Endothelial cell of umbilical vein (primary cell): ENCODE measurements at regions of chr3 and their contacts with region 1.

Region 1: DNA sequence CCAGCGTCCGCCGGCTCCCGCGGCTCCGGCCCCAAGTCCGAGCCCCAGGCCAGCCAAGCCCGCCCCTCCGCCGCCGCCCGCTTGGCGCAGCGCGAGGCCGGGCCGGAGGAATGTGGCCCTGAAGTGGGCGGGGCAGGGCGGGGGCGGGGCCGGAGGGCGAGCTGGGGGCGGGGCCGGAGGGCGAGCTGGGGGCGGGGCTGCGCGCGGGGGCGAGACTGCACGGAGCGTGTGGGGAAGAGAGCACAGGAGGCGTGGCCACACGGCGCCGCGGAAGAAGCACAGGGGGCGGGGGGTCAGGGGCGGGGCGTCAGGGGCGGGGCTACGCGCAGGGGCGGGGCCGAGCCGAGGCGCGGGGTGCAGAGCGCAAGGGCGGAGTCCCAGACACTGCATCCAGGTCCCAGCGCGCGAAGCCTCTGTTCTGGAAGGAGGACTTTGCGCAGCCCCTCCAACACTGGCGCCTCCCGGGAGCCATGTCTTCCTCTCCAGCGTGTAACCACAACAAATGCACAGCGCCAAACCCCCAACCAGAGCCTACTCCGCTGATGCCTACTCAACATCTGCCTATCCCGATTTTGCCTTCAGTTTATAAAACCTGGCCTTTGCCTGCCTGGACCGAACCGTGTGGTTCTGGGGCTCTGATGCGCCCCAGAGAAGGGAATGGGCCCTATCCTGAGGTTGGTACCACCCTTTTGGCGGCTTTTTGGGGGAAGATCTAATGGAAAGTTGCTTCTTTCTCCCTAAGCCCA is 105.5 kb downstream of the IQSEC1 start:
- DNase-seq: peak; percentile 69
- H3K4me3 ChIP-seq: peak overlapping the region; percentile 70 to 92 (median 72)
- H3K27ac ChIP-seq: no peak overlapping the region
- H3K4me1 ChIP-seq: peaks cover 30% of the 10 kb centered on the region
- H3K27me3 ChIP-seq: peaks cover 11 to 14% of the 10 kb centered on the region in 2 experiments
- CTCF ChIP-seq: no peak
- POLR2A ChIP-seq: peak; percentile 52

Region 2: GRCh38 chr3:12922306-12922705 is 45.5 kb before region 1 on chr3:
- CTCF ChIA-PET with region 1: interaction called, 3 read pairs
- POLR2A ChIA-PET with region 1: no interaction called
- dilution Hi-C with region 1: no loop called
- intact Hi-C with region 1: loop called (anchors 5 kb)
- DNase-seq: peak; percentile 21
- H3K4me3 ChIP-seq: no peak overlapping the region
- H3K27ac ChIP-seq: no peak overlapping the region
- H3K4me1 ChIP-seq: peaks cover 17% of the 10 kb centered on the region
- H3K27me3 ChIP-seq: no peaks in the 10 kb centered on the region
- CTCF ChIP-seq: no peak
- POLR2A ChIP-seq: no peak

Region 3: GRCh38 chr3:12948891-12949711 is 18.7 kb before region 1 on chr3:
- CTCF ChIA-PET with region 1: interaction called, 10 read pairs
- POLR2A ChIA-PET with region 1: no interaction called
- dilution Hi-C with region 1: no loop called
- intact Hi-C with region 1: no loop called
- DNase-seq: peak; percentile 45
- H3K4me3 ChIP-seq: no peak overlapping the region
- H3K27ac ChIP-seq: no peak overlapping the region
- H3K4me1 ChIP-seq: peaks cover 15% of the 10 kb centered on the region
- H3K27me3 ChIP-seq: no peaks in the 10 kb centered on the region
- CTCF ChIP-seq: peak in 1 of 2 donors; percentile 22
- POLR2A ChIP-seq: no peak

Region 4: DNA sequence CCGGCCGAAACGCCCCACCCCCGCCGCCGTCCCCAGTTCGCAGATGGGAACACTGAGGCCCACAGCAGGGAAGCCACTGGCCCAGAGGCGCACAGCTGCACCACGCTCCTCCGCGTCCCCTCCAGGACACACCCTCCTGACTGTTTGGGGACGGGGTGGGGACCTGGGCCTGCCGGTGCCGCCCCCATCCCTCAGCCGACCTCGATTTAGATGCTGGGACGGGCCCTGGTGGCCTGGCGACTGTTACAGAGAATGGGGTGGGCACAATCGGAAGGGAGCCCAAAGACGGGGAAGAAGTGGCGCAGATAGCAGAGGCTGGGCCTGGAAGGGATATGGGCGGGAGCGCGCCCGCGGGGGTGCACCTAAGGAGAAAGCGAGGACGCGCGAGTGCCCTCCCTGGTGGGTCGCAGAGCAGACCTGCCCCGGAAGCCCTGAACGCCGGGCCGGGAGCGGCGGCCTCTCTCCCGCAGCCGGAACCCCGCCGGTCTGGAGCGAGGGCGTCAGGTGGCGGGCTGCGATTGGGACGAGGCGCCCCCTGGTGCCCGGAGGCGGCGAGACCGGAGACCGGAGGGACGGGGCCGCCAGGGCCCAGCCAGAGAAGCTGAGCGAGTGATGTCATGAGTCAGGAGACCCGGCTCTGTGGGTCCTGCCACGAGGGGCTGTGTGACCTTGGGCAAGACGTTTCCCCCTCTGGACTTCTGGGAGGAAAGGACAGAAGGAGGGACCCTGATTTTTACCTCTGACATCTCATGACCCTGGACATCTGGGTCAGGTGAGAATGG is 27.0 kb after region 1 on chr3:
- CTCF ChIA-PET with region 1: interaction called, 17 read pairs
- POLR2A ChIA-PET with region 1: no interaction called
- dilution Hi-C with region 1: no loop called
- intact Hi-C with region 1: loop called (anchors 2 kb)
- DNase-seq: peak; percentile 79
- H3K4me3 ChIP-seq: peak overlapping the region; percentile 30 to 49 (median 41)
- H3K27ac ChIP-seq: no peak overlapping the region
- H3K4me1 ChIP-seq: peaks cover 5% of the 10 kb centered on the region
- H3K27me3 ChIP-seq: peaks cover 8 to 22% of the 10 kb centered on the region in 2 experiments
- CTCF ChIP-seq: peak; percentile 95 to 97
- POLR2A ChIP-seq: no peak